Activated CD8-positive, alpha-beta T cell treated with anti-CD3 and anti-CD28 coated beads for 36 hours (primary cell): ENCODE measurements at regions of chr5 and their contacts with region 1.

Region 1: DNA sequence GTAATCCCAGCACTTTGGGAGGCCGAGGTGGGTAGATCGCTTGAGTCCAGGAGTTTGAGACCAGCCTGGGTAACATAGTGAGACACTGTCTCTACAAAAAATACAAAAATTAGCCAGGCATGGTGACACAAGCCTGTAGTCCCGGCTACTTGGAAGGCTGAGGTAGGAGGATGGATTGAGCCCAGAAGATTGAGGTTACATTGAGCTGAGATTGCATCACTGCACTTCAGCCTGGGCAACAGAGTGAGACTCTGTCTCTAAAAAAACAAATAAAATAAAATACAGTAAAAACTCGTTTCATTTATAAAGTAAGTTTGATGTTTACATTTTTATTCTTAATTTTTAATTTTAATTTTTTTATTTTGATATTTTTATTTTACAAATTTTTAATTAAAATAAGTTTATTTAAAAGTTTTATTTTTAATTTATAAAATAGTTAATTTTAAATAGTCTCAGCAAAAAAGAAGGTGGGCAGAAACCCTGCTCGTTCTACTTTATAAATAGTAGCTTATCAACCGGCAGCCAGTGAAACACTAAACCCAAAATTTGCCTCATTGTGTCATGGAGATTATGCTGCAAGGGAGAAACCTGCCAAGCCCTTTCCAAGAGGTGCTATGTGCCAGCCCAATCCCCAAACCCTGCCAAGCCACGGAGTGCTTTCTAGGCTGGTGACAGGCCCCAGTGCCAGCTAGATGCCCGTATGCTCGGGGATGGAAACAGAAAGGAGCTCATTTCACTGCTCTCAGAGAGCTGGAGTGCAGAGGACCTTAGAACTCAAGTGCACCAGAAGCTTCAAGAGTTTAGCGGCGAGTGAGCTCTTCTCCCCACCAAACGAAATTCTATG is 38.9 kb downstream of the SERINC5 start:
- DNase-seq: peak; percentile 67
- ATAC-seq: peak; percentile 22
- H3K4me3 Mint-ChIP-seq: peak overlapping the region; percentile 60
- H3K27ac Mint-ChIP-seq: peak overlapping the region; percentile 91
- H3K4me1 Mint-ChIP-seq: peaks cover 85% of the 10 kb centered on the region
- H3K27me3 Mint-ChIP-seq: no peaks in the 10 kb centered on the region
- CTCF ChIP-seq: no peak

Region 2: DNA sequence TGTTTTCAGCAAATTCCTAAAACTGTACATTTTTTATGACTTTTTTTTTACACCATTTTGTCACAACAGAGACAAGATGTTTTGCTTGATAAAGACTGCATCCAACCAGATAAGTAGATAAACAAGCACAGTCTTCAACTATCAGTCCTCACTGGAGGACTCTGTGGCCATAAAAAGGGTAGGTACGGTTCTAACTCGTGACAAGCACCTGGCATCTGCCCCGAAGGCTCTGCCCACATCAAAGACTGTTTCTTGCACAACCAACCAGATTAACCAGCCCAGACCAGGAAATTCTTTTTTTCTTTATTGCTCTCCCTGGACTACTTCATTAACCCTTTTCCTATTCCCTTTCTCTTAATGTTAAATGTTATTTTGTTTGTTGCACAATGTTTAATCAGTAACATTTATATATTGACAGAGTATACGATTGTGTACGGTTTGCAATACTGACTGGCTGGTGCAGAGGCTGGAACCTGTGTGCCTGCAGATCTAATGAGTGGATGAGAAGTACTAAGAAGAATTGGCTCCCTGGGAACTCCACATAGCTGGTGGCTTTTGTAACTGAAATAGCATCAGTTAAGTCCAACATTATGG is 35.3 kb before region 1 on chr5:
- CTCF ChIA-PET with region 1: interaction called, 4 read pairs
- POLR2A ChIA-PET with region 1: interaction called, 19 read pairs
- intact Hi-C with region 1: loop called (anchors 5 kb)
- DNase-seq: peak; percentile 68
- ATAC-seq: peak; percentile 34
- H3K4me3 Mint-ChIP-seq: peak overlapping the region; percentile 36
- H3K27ac Mint-ChIP-seq: peak overlapping the region; percentile 86
- H3K4me1 Mint-ChIP-seq: peaks cover 84% of the 10 kb centered on the region
- H3K27me3 Mint-ChIP-seq: no peaks in the 10 kb centered on the region
- CTCF ChIP-seq: no peak

Region 3: DNA sequence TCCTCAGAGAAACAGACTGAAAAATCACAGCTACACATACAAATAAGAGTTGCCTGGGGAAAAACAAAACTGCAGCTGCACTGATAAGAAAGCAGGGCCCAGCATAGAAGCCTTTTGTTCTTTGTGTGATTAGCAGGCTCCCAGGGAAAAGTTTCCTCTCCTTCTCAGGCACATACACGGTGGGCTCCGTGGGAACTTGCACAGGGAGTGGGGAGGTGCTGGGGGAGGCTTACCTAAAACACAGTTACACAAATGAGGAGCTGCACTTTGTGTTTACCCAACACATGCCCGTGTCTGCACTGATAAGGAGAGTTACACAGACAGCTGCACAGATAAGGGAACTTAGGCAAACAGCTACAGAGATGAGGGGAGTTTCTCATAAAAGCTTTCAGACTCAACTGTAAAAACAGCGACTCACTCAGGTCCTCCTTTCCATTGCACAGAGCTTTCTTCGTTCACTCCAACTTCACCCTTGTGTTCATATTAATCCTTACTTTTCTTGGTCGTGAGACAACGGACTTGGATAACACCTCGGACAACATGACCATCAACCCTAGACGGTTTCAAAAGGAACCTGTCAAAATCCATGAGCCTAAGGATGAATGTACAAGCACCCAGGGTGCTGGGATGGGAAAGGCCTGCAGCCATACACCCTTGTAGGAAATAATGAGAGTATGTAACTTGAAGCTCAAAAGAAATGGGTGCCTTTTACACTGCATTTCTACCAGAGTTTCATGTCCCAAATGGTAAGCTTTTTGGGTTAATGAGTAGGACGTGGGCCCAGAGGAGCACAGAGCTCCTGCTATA is 12.0 kb before region 1 on chr5:
- CTCF ChIA-PET with region 1: interaction called, 19 read pairs
- POLR2A ChIA-PET with region 1: interaction called, 18 read pairs
- intact Hi-C with region 1: no loop called
- DNase-seq: no peak
- ATAC-seq: peak; percentile 59
- H3K4me3 Mint-ChIP-seq: no peak overlapping the region
- H3K27ac Mint-ChIP-seq: peak overlapping the region; percentile 84
- H3K4me1 Mint-ChIP-seq: peaks cover 76% of the 10 kb centered on the region
- H3K27me3 Mint-ChIP-seq: no peaks in the 10 kb centered on the region
- CTCF ChIP-seq: no peak